ENCODE measurements at regions of chr4 and their contacts with region 1.

Region 1: DNA sequence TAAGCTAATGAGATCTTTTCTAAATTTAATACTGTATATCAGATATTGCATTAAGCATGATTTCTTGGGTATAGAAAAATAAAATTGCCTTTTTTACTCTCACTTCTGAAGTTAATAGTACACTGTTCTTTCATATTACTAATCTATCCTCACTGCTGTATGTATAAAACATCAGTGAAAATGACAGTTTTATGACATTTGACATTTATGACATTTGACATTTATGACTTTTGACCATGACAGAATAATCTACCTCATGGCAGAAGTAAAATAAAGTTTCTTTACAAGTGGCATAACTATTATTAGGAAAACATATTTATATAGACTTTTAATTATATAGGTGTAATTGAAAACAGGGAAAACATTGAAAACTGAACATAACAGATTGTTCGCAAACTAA is 13.3 kb downstream of the GRID2 start:
- DNase-seq: no peak
- H3K4me3 ChIP-seq: no peak overlapping the region
- H3K27ac ChIP-seq: no peak overlapping the region
- H3K27me3 ChIP-seq: no peaks in the 10 kb centered on the region
- CTCF ChIP-seq: no peak

Region 2: DNA sequence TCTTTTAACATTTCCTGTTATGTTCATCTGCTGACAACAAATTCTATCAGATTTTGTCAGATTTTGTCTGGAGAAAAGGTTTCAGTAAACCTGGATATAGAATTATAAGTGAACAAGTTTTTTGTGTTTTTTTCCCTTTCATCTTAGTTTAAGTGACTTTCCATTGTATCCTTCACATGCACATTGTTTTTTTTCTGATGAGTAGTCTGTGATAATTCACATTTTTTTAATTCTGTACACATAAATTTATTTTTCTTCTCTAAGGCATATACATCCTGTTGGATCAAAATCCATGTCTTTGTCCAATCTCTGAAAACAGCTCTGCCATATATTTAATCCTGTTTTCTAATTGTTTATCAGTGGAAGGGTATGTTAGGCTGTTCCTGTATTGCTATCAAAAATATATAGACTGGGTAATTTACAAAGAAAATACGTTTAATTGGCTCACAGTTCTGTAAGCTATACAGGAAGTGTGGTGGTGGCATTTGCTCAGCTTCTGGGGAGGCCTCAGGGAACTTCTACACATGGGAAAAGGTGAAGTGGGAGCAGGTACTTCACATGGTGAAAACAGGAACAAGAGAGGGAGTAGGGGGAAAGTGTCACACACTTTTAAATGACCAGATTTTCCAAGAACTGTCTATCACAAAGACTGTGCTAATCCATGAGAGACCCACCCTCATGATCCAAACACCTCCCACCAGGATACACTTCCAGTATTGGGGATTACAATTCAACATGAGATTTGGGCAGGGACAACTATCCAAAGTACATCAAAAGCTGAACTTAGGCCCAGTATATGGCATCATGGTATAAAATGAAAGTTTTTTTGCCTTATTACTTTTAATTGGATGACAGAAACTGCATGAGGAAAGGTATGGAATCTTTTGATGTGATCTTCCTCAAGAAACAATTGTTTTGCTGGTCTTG is 58.9 kb before region 1 on chr4:
- CTCF ChIA-PET with region 1: interaction called, 10 read pairs
- POLR2A ChIA-PET with region 1: no interaction called
- DNase-seq: no peak
- H3K4me3 ChIP-seq: no peak overlapping the region
- H3K27ac ChIP-seq: no peak overlapping the region
- H3K27me3 ChIP-seq: no peaks in the 10 kb centered on the region
- CTCF ChIP-seq: no peak

Region 3: DNA sequence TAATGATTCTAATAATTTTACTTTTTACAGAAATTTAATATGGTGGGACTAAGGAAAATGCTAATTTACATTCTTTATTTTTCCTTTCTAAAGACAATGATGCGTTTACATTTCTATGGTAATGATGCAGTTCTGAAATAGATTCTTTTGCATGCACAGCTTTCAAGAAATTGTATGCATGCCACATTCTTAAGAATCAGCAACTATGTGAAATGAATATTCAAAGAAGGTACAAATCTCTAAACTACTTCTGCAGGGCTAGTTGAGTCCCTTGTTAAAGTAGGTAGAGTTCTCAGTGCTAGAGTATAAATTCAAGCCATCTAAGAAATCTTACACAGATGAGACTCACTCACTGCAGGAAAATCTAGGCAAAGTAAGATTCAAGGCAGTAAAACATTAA is 37.8 kb before region 1 on chr4:
- CTCF ChIA-PET with region 1: no interaction called
- POLR2A ChIA-PET with region 1: no interaction called
- DNase-seq: no peak
- H3K4me3 ChIP-seq: no peak overlapping the region
- H3K27ac ChIP-seq: no peak overlapping the region
- H3K27me3 ChIP-seq: no peaks in the 10 kb centered on the region
- CTCF ChIP-seq: no peak